Activated CD4-positive, alpha-beta memory T cell treated with anti-CD3 and anti-CD28 coated beads, Interleukin-2, amount 10 ng/mL, durations not matched to agents 7 days and 5 days (primary cell): ENCODE measurements at regions of chr5 and their contacts with region 1.

Region 1: GRCh38 chr5:132490486-132491367 is at the start of gene IRF1:
- DNase-seq: peak; percentile 99
- H3K4me3 Mint-ChIP-seq: peak within 1 kb of the TSS; percentile 91
- H3K27ac Mint-ChIP-seq: peak within 1 kb of the TSS; percentile 92
- H3K4me1 Mint-ChIP-seq: peaks cover 68% of the 10 kb centered on the region
- H3K27me3 Mint-ChIP-seq: no peaks in the 10 kb centered on the region
- total RNA-seq, gene IRF1: 231 to 239 TPM

Region 2: DNA sequence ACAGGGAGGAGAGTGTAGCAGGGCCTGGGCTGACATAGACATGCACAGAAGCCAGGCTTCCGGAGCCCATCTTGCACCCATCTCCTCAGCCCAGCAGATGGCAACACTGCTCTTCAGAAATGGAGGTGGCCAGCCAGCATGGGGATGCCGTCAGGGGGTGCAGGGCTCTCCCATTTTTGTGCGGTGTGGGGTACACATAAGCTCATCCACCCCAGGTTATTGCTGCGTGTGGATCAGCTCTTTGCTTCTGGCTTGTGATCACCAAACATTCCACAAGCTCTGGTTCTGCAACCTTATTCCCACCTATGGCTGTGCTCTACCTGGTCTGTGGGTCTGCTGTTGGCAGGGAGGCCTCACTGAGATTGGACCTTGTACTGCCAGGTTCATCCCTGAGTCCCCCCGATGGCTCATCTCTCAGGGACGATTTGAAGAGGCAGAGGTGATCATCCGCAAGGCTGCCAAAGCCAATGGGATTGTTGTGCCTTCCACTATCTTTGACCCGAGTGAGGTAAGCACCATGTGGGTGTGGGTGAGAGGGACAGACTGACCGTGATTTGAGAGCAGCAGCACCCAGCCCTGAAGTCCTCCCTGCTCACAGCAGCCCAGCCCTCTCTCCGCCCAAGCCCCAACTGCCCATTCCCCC is 104.0 kb before region 1 on chr5:
- CTCF ChIA-PET with region 1: interaction called, 333 read pairs
- POLR2A ChIA-PET with region 1: interaction called, 138 read pairs
- DNase-seq: peak; percentile 83
- H3K4me3 Mint-ChIP-seq: no peak overlapping the region
- H3K27ac Mint-ChIP-seq: peak overlapping the region; percentile 31
- H3K4me1 Mint-ChIP-seq: peaks cover 52% of the 10 kb centered on the region
- H3K27me3 Mint-ChIP-seq: no peaks in the 10 kb centered on the region

Region 3: DNA sequence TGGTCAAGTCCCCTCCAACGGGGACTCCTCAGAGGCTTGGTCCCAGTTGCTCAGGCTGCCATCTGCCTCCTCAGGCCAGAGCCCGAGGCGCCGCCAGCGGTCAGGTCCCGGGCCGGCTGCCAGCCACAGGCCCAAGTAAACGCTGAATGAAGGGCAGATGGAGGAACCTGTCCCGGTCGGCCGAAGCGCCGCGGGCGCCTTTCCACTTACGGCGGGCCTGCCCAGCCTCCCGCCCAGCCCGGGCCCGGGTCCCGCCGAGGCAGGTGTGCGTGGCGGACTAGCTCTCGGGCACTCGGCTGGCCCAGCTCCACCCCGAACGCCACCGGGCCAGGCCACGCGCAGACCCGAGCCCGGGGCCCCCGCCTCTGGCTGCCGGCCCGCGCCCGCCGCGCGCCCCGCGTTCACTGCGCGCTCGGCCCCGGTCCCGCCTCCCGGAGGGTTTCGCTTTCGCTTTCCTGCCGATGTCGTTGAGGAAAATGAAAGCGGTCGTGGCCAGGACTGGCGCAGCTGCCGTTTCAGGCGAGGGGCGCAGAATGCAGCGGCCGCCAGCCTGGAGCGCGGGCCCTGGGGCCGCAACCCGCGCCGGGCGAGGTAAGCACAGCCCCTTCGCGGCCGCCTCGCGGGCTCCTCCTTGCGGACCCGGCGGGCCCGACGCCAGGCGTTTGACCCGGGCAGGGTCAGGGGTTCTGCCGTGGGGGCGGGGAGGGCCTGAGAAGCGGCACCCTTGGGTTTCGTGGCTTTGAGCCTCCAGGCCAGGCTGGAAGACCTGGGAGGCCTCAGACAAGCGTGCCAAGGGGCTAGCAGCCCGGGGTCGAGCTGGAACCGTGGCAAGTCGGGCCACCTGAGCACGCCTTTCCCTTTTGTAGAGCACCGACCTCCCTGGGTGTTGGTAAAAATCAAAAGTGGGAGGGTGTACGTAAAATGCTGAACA is 80.0 kb before region 1 on chr5:
- CTCF ChIA-PET with region 1: interaction called, 47 read pairs
- POLR2A ChIA-PET with region 1: interaction called, 399 read pairs
- DNase-seq: peak; percentile 89
- H3K4me3 Mint-ChIP-seq: peak overlapping the region; percentile 95
- H3K27ac Mint-ChIP-seq: peak overlapping the region; percentile 99
- H3K4me1 Mint-ChIP-seq: peaks cover 59% of the 10 kb centered on the region
- H3K27me3 Mint-ChIP-seq: no peaks in the 10 kb centered on the region

Region 4: DNA sequence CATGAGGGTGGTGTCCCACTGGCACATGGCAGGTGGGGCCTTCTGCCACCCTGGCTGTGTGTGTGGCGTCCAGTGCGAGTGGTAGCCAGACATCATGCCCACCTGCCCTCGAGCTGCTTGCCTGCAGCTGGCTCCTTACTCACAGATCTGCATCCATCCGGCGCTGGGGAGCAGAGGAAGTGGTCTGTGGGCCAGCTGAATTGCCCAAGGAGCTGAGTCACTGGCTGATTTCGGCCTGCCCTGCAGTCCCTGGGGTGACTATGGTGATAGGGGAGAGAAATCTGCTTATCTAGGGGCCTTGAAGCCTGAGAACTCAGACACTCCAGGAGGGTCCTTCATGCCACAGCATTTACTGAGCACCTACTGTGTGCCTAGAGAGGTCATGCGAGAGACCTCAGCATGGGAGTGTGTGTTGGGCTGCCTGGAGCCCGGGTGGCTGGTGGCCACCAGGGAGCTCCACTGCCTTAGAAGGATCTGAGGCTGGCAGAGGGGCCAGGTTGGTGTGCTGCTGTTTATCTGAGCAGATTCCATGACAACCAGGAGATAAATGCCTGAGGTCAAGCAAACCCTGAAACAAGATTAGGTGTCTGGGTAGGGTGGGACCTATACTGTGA is 64.1 kb before region 1 on chr5:
- CTCF ChIA-PET with region 1: interaction called, 66 read pairs
- POLR2A ChIA-PET with region 1: interaction called, 1,155 read pairs
- DNase-seq: peak; percentile 90
- H3K4me3 Mint-ChIP-seq: peak overlapping the region; percentile 77
- H3K27ac Mint-ChIP-seq: peak overlapping the region; percentile 99
- H3K4me1 Mint-ChIP-seq: peaks cover 98% of the 10 kb centered on the region
- H3K27me3 Mint-ChIP-seq: no peaks in the 10 kb centered on the region

Region 5: DNA sequence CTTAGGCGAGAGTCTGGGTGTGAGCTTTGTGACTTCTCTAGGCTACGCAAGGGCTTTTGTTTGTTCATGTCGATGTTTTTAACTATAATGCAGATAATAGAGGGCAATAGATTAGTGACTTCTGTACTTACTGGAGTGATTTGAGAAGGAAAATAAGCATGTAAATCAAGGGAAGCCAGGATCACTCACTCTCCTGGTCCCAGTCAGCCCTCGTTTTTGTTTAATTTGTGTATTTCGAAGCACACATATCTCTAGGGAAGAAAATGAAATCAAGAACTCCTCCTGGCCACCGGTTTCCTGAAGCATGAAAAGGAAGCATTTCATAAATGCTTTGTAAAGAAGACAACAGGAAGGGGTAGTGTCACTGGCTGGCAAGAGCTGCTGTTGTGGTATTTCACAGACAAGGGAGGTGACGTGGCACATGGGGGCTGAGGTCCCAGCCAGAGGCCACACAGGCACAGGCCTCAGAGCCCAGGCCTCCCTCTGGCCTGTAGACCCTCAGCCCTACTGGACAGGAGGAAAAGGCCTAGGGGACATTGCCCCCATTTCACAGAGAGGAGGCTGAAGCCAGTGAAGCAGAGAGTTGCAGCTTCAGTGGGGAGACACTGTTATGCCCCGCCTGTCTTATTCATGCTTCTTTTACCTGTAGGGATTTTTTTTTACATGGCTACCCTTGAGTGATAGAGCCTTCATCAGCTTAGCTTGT is 34.3 kb before region 1 on chr5:
- CTCF ChIA-PET with region 1: interaction called, 15 read pairs
- POLR2A ChIA-PET with region 1: interaction called, 563 read pairs
- DNase-seq: peak; percentile 75
- H3K4me3 Mint-ChIP-seq: peak overlapping the region; percentile 53
- H3K27ac Mint-ChIP-seq: peak overlapping the region; percentile 99
- H3K4me1 Mint-ChIP-seq: peaks cover 91% of the 10 kb centered on the region
- H3K27me3 Mint-ChIP-seq: no peaks in the 10 kb centered on the region

Region 6: GRCh38 chr5:132473019-132473531 is 17.7 kb before region 1 on chr5:
- CTCF ChIA-PET with region 1: interaction called, 41 read pairs
- POLR2A ChIA-PET with region 1: interaction called, 1,032 read pairs
- DNase-seq: peak; percentile 94
- H3K4me3 Mint-ChIP-seq: peak overlapping the region; percentile 28
- H3K27ac Mint-ChIP-seq: peak overlapping the region; percentile 94
- H3K4me1 Mint-ChIP-seq: peaks cover 90% of the 10 kb centered on the region
- H3K27me3 Mint-ChIP-seq: no peaks in the 10 kb centered on the region

Region 7: DNA sequence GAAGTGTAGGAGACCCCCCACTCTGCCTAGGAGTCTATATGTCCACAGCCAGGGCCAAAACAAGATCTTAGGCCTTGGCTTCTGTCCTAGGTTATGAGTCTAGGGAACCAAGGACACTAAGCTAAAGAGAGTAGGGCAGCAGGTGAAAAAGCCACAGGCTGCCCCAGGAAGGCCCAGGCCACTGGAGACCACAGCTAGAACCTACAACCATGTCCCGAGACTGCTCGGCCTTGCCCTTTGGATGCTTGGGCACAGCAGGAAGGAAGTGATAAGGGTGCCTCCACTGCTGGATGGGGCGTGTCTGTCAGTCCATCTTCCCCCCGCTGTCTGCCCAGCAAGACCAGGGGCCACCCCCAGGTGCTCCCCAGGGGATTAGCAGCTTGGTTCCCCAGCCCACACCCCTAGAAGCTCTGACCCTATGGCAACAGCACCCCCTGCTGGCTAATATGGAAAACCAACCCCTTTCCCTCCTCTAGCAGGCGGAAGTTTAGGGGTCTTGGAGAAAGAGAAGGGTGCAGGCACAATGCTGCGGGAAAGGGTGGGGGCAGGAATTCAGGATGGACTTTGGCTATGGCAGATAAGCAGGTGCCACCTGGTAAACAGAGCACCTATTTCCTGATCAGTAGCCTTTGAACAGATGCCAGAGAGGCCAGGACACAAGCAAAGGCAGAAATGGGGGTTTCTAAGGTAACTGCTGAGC is 10.4 kb after region 1 on chr5:
- CTCF ChIA-PET with region 1: interaction called, 39 read pairs
- POLR2A ChIA-PET with region 1: interaction called, 1,032 read pairs
- DNase-seq: peak; percentile 78
- H3K4me3 Mint-ChIP-seq: no peak overlapping the region
- H3K27ac Mint-ChIP-seq: no peak overlapping the region
- H3K4me1 Mint-ChIP-seq: peaks cover 39% of the 10 kb centered on the region
- H3K27me3 Mint-ChIP-seq: peaks cover 3% of the 10 kb centered on the region

Region 8: GRCh38 chr5:132591145-132591544 is 100.4 kb after region 1 on chr5:
- CTCF ChIA-PET with region 1: no interaction called
- POLR2A ChIA-PET with region 1: no interaction called
- DNase-seq: no peak
- H3K4me3 Mint-ChIP-seq: no peak overlapping the region
- H3K27ac Mint-ChIP-seq: no peak overlapping the region
- H3K4me1 Mint-ChIP-seq: peaks cover 4% of the 10 kb centered on the region
- H3K27me3 Mint-ChIP-seq: no peaks in the 10 kb centered on the region